ENCODE measurements at regions of chr1 and their contacts with region 1.

Region 1: GRCh38 chr1:161389691-161390558 is 22.2 kb upstream of the CFAP126 start:
- DNase-seq: peak; percentile 97 to 99 (median 98)
- ATAC-seq: peak; percentile 93 to 97 (median 95)
- H3K4me3 ChIP-seq: peak overlapping the region; percentile 43 to 94 (median 70)
- H3K27ac ChIP-seq: peak overlapping the region; percentile 43 to 97 (median 90)
- H3K4me1 ChIP-seq: peaks cover 0 to 40% (median 7%) of the 10 kb centered on the region in 12 donors
- H3K27me3 ChIP-seq: no peaks in the 10 kb centered on the region
- CTCF ChIP-seq: no peak
- POLR2A ChIP-seq: peak; percentile 83 to 90

Region 2: GRCh38 chr1:161185282-161185682 is 204.6 kb before region 1 on chr1:
- intact Hi-C with region 1: loop called in 2 of 10 experiments (anchors 5 to 10 kb)
- DNase-seq: peak; percentile 82 to 90 (median 89)
- ATAC-seq: peak; percentile 76 to 93 (median 87)
- H3K4me3 ChIP-seq: peak overlapping the region in 1 of 12 donors; percentile 42
- H3K27ac ChIP-seq: peak overlapping the region; percentile 19 to 92 (median 66)
- H3K4me1 ChIP-seq: peaks cover 0 to 91% (median 20%) of the 10 kb centered on the region in 12 donors
- H3K27me3 ChIP-seq: no peaks in the 10 kb centered on the region
- CTCF ChIP-seq: no peak
- POLR2A ChIP-seq: no peak

Region 3: DNA sequence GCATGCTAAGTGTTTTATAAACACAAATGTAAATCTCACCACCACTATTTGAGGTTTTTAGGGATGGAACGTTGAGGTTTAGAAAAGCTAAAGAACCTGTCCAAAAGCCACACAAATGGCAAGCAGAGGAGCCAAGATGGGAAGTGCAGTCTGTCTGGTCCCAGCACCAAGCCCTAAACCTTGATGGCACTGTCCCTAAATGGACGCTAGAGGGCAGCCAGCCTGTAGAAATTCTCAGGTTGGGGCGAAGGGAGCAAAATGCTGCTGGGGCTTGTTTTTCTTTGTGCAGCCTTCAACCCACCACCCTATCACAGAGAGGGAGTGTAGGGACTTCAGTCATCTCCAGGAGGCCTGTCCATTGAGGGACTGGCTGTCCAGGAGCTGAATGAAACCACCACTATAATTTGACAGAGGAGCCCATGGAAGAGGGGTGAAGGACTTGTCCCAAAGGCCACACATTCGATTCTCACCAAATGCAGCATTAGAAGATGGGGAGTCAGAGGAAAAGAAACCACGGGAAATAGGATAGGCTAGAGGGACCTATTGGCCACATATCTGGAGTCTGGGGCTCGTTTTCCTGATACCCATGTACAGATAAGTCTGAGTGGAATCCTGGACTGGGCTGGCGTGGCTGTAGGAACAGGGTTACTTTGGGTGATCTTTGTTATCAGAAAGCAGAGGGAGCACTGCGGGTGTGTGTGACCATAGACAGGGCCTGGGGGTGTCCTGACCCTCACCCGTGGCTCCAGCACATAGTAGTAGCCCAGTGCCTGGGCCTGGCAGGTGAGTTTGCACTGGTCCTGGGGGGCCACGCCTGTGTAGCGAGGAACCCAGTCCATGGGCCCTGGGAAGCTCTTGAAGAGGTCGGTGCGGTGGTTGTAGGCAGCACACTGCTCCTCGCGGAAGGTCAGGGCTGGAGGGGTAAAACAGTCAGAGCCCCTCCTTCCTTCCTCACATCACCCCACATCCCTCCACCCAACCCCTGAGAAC is 197.2 kb before region 1 on chr1:
- intact Hi-C with region 1: loop called in 2 of 10 experiments (anchors 5 to 10 kb)
- DNase-seq: peak in 4 of 5 donors; percentile 57 to 70 (median 68)
- ATAC-seq: peak; percentile 30 to 62 (median 50)
- H3K4me3 ChIP-seq: peak overlapping the region in 3 of 12 donors; percentile 56 to 62 (median 60)
- H3K27ac ChIP-seq: peak overlapping the region in 6 of 12 donors; percentile 3 to 98 (median 62)
- H3K4me1 ChIP-seq: peaks cover 0 to 73% (median 32%) of the 10 kb centered on the region in 12 donors
- H3K27me3 ChIP-seq: no peaks in the 10 kb centered on the region
- CTCF ChIP-seq: peak; percentile 80 to 92 (median 87)
- POLR2A ChIP-seq: no peak

Region 4: GRCh38 chr1:161314201-161314981 is 75.5 kb before region 1 on chr1 and contains the start of gene SDHC:
- intact Hi-C with region 1: loop called in 1 of 10 experiments (anchors 10 kb)
- DNase-seq: peak; percentile 90 to 95 (median 91)
- ATAC-seq: peak; percentile 98 to 100 (median 99)
- H3K4me3 ChIP-seq: peak within 1 kb of the TSS; percentile 70 to 96 (median 87)
- H3K27ac ChIP-seq: peak within 1 kb of the TSS; percentile 91 to 98 (median 94)
- H3K4me1 ChIP-seq: peaks cover 0 to 25% (median 15%) of the 10 kb centered on the region in 12 donors
- H3K27me3 ChIP-seq: no peaks in the 10 kb centered on the region
- CTCF ChIP-seq: peak in 6 of 12 donors; percentile 11 to 29 (median 22)
- POLR2A ChIP-seq: peak in 1 of 2 donors; percentile 72
- total RNA-seq, gene SDHC: 113 to 408 (median 314) TPM

Measured in heart left ventricle (tissue), 16 donors.